Breast epithelium (tissue), 4 donors: ENCODE measurements at regions of chr2 and their contacts with region 1.

Region 1: GRCh38 chr2:109613922-109614714 is at the starts of genes SEPTIN10 and SOWAHC:
- DNase-seq: peak; percentile 93 to 95
- H3K4me3 ChIP-seq: peak within 1 kb of the TSS; percentile 65 to 96 (median 86)
- H3K27ac ChIP-seq: peak within 1 kb of the TSS; percentile 99
- H3K4me1 ChIP-seq: peaks cover 0 to 24% of the 10 kb centered on the region in 2 donors
- H3K27me3 ChIP-seq: no peaks in the 10 kb centered on the region
- CTCF ChIP-seq: no peak
- POLR2A ChIP-seq: peak; percentile 74
- total RNA-seq, gene SEPTIN10: 93.5 to 116 (median 100) TPM
- total RNA-seq, gene SOWAHC: 9.1 to 18.4 (median 14.7) TPM

Region 2: GRCh38 chr2:109594246-109594885 is 19.8 kb before region 1 on chr2:
- intact Hi-C with region 1: no loop called
- DNase-seq: no peak
- H3K4me3 ChIP-seq: no peak overlapping the region
- H3K27ac ChIP-seq: no peak overlapping the region
- H3K4me1 ChIP-seq: no peaks in the 10 kb centered on the region
- H3K27me3 ChIP-seq: no peaks in the 10 kb centered on the region
- CTCF ChIP-seq: no peak
- POLR2A ChIP-seq: no peak

Region 3: DNA sequence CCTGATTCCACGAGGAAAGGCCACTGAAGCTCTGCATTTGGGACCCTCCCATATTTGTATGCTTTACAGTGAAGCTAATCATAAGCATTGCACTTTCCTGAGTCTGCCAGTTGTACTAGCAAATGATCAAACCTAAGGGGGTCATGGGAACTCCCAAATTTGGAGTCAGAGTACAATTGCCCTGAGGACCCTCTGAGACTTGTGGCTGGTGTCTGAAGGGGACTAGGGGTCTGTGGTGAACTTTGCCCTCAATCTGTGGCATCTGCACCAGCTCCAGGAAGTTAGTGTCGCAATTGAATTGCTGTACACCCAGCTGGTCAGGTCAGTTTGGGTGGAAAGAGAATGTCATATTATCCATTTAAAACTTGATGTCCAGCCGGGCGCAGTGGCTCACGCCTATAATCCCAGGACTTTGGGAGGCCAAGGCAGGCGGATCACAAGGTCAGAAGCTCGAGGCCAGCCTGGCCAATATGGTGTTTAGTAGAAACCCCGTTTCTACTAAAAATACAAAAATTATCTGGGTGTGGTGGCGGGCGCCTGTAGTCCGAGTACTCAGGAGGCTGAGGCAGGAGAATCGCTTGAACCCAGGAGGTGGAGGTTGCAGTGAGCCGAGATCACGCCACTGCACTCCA is 18.2 kb after region 1 on chr2:
- intact Hi-C with region 1: loop called (anchors 1 kb)
- DNase-seq: no peak
- H3K4me3 ChIP-seq: no peak overlapping the region
- H3K27ac ChIP-seq: no peak overlapping the region
- H3K4me1 ChIP-seq: no peaks in the 10 kb centered on the region
- H3K27me3 ChIP-seq: no peaks in the 10 kb centered on the region
- CTCF ChIP-seq: no peak
- POLR2A ChIP-seq: no peak